ENCODE measurements at regions of chr2 and their contacts with region 1.

Region 1: GRCh38 chr2:146523196-146523595 is 1321.6 kb upstream of the ACVR2A start:
- DNase-seq: peak; percentile 16
- H3K4me3 ChIP-seq: no peak overlapping the region
- H3K27ac ChIP-seq: no peak overlapping the region
- H3K4me1 ChIP-seq: no peaks in the 10 kb centered on the region
- H3K27me3 ChIP-seq: no peaks in the 10 kb centered on the region
- CTCF ChIP-seq: no peak
- POLR2A ChIP-seq: no peak

Region 2: GRCh38 chr2:145760781-145761649 is 762.2 kb before region 1 on chr2:
- CTCF ChIA-PET with region 1: interaction called, 4 read pairs
- POLR2A ChIA-PET with region 1: no interaction called
- dilution Hi-C with region 1: no loop called
- intact Hi-C with region 1: loop called (anchors 2 kb)
- DNase-seq: peak; percentile 93
- H3K4me3 ChIP-seq: no peak overlapping the region
- H3K27ac ChIP-seq: peak overlapping the region; percentile 71
- H3K4me1 ChIP-seq: peaks cover 11% of the 10 kb centered on the region
- H3K27me3 ChIP-seq: no peaks in the 10 kb centered on the region
- CTCF ChIP-seq: no peak
- POLR2A ChIP-seq: no peak

Region 3: GRCh38 chr2:146312899-146313298 is 210.3 kb before region 1 on chr2:
- CTCF ChIA-PET with region 1: interaction called, 16 read pairs
- POLR2A ChIA-PET with region 1: no interaction called
- dilution Hi-C with region 1: no loop called
- intact Hi-C with region 1: loop called (anchors 1 kb)
- DNase-seq: peak; percentile 65
- H3K4me3 ChIP-seq: no peak overlapping the region
- H3K27ac ChIP-seq: peak overlapping the region; percentile 40
- H3K4me1 ChIP-seq: peaks cover 14% of the 10 kb centered on the region
- H3K27me3 ChIP-seq: no peaks in the 10 kb centered on the region
- CTCF ChIP-seq: no peak
- POLR2A ChIP-seq: no peak

Region 4: DNA sequence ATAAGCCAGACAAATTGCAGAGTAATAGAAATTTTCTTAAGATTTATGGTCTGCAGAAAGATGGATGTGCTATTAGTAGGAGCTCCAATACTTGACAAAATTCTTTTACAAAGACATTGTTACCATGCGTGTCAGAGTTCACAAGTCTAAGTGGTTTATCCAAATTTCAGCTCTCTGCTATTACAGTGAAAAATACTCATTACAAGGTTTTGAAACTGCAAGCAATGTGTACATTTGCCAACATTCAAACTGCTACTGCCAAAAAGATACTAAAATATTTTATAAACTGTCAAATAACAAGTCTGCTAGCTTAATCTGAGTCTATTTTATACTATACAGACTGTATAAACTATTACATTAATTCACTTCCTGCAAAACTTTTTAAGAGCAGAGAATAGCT is 19.8 kb before region 1 on chr2:
- CTCF ChIA-PET with region 1: interaction called, 14 read pairs
- POLR2A ChIA-PET with region 1: no interaction called
- dilution Hi-C with region 1: no loop called
- intact Hi-C with region 1: no loop called
- DNase-seq: no peak
- H3K4me3 ChIP-seq: no peak overlapping the region
- H3K27ac ChIP-seq: no peak overlapping the region
- H3K4me1 ChIP-seq: peaks cover 2% of the 10 kb centered on the region
- H3K27me3 ChIP-seq: no peaks in the 10 kb centered on the region
- CTCF ChIP-seq: no peak
- POLR2A ChIP-seq: no peak

Measured in endothelial cell of umbilical vein (primary cell).